ENCODE measurements at regions of chr5 and their contacts with region 1.

Region 1: DNA sequence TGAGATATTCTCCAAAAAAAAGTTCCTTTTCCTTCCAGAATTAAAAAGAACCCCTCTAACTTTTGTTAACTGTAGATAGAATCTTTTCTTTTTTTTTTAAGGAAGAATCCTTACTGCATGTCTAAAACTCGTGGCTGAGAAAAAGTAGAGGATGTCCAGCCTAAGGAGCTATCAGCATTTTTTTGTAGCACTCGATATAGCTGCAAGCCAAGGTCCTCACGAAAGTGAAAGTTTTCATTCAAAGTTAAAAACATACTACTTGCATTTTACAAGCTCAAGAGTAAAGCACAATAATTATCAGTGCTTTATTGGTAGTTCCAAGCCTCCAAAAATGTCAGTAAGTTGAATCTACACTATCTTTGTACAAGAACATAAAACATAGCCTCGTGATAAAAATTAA is 28.7 kb upstream of the ZSWIM6 start:
- DNase-seq: no peak
- H3K4me3 ChIP-seq: no peak overlapping the region
- H3K27me3 ChIP-seq: no peaks in the 10 kb centered on the region
- CTCF ChIP-seq: no peak

Region 2: GRCh38 chr5:61228691-61229280 is 74.6 kb before region 1 on chr5:
- CTCF ChIA-PET with region 1: no interaction called
- POLR2A ChIA-PET with region 1: no interaction called
- DNase-seq: no peak
- H3K4me3 ChIP-seq: no peak overlapping the region
- H3K27me3 ChIP-seq: no peaks in the 10 kb centered on the region
- CTCF ChIP-seq: no peak

Region 3: GRCh38 chr5:61357745-61358144 is 54.4 kb after region 1 on chr5:
- CTCF ChIA-PET with region 1: no interaction called
- POLR2A ChIA-PET with region 1: interaction called, 21 read pairs
- DNase-seq: no peak
- H3K4me3 ChIP-seq: no peak overlapping the region
- H3K27me3 ChIP-seq: no peaks in the 10 kb centered on the region
- CTCF ChIP-seq: peak; percentile 28; the same call in 1 of the 2 replicates

Region 4: GRCh38 chr5:61575103-61575502 is 271.8 kb after region 1 on chr5:
- CTCF ChIA-PET with region 1: no interaction called
- POLR2A ChIA-PET with region 1: no interaction called
- DNase-seq: peak; percentile 48
- H3K4me3 ChIP-seq: no peak overlapping the region
- H3K27me3 ChIP-seq: peaks cover 1% of the 10 kb centered on the region
- CTCF ChIP-seq: no peak